CD8-positive, alpha-beta memory T cell (primary cell): ENCODE measurements at regions of chr9 and their contacts with region 1.

Region 1: GRCh38 chr9:94213511-94214124 is 45.5 kb upstream of the ZNF169 start:
- DNase-seq: peak; percentile 44 to 79 (median 63)
- H3K4me3 ChIP-seq: no peak overlapping the region
- H3K4me3 Mint-ChIP-seq: no peak overlapping the region
- H3K27ac ChIP-seq: no peak overlapping the region
- H3K27ac Mint-ChIP-seq: no peak overlapping the region
- H3K4me1 ChIP-seq: no peaks in the 10 kb centered on the region
- H3K4me1 Mint-ChIP-seq: peaks cover 3 to 5% (median 4%) of the 10 kb centered on the region in 3 donors
- H3K27me3 ChIP-seq: peaks cover 4% of the 10 kb centered on the region
- H3K27me3 Mint-ChIP-seq: peaks cover 13 to 51% of the 10 kb centered on the region in 2 donors

Region 2: DNA sequence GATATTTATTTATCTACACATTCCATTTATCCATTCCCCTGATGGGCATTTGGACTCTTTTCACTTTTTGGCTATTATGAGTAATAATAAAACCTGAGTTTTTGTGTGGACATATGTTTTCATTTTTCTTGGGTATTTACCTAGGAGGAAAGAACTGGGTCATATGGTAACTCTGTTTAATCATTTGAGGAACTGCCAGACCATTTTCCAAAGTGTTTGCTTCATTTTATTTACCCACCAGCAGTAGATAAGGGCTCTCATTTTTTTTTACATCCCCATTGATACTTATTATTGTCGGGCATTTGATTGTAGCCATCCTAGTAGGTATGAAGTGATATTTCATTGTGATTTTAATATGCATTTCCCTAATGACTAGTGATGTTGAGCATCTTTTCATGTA is 137.1 kb before region 1 on chr9:
- CTCF ChIA-PET with region 1: interaction called, 16 read pairs
- POLR2A ChIA-PET with region 1: no interaction called
- DNase-seq: no peak
- H3K4me3 ChIP-seq: no peak overlapping the region
- H3K4me3 Mint-ChIP-seq: no peak overlapping the region
- H3K27ac ChIP-seq: no peak overlapping the region
- H3K27ac Mint-ChIP-seq: no peak overlapping the region
- H3K4me1 ChIP-seq: no peaks in the 10 kb centered on the region
- H3K4me1 Mint-ChIP-seq: no peaks in the 10 kb centered on the region
- H3K27me3 ChIP-seq: no peaks in the 10 kb centered on the region
- H3K27me3 Mint-ChIP-seq: no peaks in the 10 kb centered on the region